Thyroid gland (tissue), 4 donors: ENCODE measurements at regions of chr13 and their contacts with region 1.

Region 1: GRCh38 chr13:97109841-97110492 is 112.2 kb upstream of the MBNL2 start:
- DNase-seq: peak; percentile 86 to 91
- H3K4me3 ChIP-seq: no peak overlapping the region
- H3K27ac ChIP-seq: no peak overlapping the region
- H3K4me1 ChIP-seq: peaks cover 8 to 16% of the 10 kb centered on the region in 2 donors
- H3K27me3 ChIP-seq: no peaks in the 10 kb centered on the region
- CTCF ChIP-seq: peak; percentile 70 to 96 (median 94)
- POLR2A ChIP-seq: no peak

Region 2: GRCh38 chr13:97212601-97213040 is 102.7 kb after region 1 on chr13:
- intact Hi-C with region 1: loop called (anchors 10 kb)
- DNase-seq: no peak
- H3K4me3 ChIP-seq: no peak overlapping the region
- H3K27ac ChIP-seq: no peak overlapping the region
- H3K4me1 ChIP-seq: no peaks in the 10 kb centered on the region
- H3K27me3 ChIP-seq: no peaks in the 10 kb centered on the region
- CTCF ChIP-seq: peak in 4 of 6 experiments; percentile 24 to 43 (median 36)
- POLR2A ChIP-seq: no peak

Region 3: DNA sequence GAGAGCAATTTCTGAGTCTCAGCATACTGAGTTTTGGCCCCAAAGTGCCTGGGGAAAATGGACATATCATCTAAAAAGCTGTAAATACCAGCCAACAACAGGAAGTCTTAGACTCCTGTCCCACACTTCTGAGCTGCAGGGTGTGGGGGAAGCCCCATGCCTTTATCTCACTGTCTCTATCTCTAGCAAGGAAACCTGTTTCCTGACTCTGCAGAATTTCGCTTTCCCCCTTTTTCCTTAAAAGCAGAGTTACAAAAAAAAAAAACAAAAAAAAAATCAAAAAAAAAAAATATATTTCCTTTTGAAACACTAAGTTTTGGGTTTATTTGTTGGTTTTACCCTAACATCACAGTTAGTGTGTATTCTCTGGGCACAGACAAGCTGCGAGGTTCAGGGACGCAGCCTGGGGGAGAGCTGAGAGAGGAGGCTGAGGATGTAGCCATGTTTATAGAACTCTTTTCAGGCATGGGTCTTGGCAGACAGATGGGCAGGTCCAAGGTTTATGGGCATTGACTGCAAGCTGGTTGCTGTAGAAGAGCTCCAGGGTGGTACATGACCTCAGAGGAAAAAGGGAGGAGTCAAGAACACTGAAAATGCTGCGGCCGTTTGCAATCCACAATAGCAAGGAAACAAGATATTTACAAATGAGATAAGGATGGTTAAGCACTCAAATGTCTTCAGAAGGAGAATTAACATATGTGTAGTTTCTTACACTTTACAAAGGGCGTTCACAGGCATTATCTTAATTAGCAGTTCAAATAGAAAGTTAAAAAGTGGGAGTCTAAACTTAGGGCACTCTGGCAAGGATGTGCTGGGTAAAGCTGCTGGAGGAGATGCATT is 117.0 kb after region 1 on chr13:
- intact Hi-C with region 1: no loop called
- DNase-seq: no peak
- H3K4me3 ChIP-seq: no peak overlapping the region
- H3K27ac ChIP-seq: peak overlapping the region in 1 of 3 donors; percentile 45
- H3K4me1 ChIP-seq: peaks cover 34 to 47% of the 10 kb centered on the region in 2 donors
- H3K27me3 ChIP-seq: no peaks in the 10 kb centered on the region
- CTCF ChIP-seq: no peak
- POLR2A ChIP-seq: no peak

Region 4: DNA sequence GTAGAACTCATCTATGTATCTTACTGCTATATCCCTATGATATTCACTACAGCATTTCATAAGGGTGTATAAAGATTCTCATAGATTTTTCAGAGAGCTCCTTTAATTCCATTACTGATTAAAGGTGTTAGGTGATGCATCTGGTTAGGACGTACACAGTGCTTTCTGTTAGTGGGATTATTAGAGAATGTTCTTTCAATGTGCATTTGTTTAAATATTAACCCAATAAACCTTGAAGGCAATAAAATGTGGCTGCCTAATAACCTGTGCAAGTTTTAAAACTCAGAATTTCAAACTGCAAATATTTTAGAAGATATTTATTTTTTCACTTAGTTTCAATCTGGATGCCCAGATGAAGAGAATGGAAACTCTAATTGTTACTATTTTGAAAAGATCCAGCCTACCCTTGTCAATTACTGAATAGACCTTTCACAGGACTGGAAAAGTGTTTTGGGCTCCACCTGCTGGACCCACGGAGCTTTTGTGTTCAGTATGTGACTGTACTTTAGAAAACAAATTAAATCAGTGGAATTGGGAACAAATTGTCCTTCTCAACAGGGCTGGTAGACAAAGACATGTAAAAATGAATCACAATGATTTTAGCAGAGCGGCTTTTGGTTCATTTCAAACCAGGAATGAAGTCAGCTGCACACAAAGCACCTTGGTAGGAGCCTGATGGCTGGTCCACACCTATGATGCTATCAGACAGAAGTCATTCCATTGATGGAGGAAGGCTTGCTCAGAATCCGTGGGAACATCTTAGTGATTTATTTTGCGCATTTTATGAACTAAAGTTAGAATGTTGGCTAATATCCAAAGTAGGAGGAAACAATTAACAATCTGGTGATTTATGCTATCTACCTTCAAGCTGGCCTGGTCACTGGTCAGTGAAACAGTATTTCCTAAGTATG is 234.6 kb after region 1 on chr13:
- intact Hi-C with region 1: loop called (anchors 5 kb)
- DNase-seq: peak; percentile 75
- H3K4me3 ChIP-seq: no peak overlapping the region
- H3K27ac ChIP-seq: no peak overlapping the region
- H3K4me1 ChIP-seq: peaks cover 0 to 4% of the 10 kb centered on the region in 2 donors
- H3K27me3 ChIP-seq: no peaks in the 10 kb centered on the region
- CTCF ChIP-seq: peak; percentile 17 to 76 (median 65)
- POLR2A ChIP-seq: no peak

Region 5: GRCh38 chr13:97359181-97360057 is 249.5 kb after region 1 on chr13:
- intact Hi-C with region 1: loop called (anchors 5 kb)
- DNase-seq: peak; percentile 34 to 35
- H3K4me3 ChIP-seq: no peak overlapping the region
- H3K27ac ChIP-seq: peak overlapping the region in 1 of 3 donors; percentile 30
- H3K4me1 ChIP-seq: peaks cover 14 to 17% of the 10 kb centered on the region in 2 donors
- H3K27me3 ChIP-seq: no peaks in the 10 kb centered on the region
- CTCF ChIP-seq: peak; percentile 49 to 86 (median 75)
- POLR2A ChIP-seq: no peak